Activated CD4-positive, alpha-beta memory T cell treated with anti-CD3 and anti-CD28 coated beads, Interleukin-2, amount 10 ng/mL, durations not matched to agents 7 days and 5 days (primary cell): ENCODE measurements at regions of chr3 and their contacts with region 1.

Region 1: DNA sequence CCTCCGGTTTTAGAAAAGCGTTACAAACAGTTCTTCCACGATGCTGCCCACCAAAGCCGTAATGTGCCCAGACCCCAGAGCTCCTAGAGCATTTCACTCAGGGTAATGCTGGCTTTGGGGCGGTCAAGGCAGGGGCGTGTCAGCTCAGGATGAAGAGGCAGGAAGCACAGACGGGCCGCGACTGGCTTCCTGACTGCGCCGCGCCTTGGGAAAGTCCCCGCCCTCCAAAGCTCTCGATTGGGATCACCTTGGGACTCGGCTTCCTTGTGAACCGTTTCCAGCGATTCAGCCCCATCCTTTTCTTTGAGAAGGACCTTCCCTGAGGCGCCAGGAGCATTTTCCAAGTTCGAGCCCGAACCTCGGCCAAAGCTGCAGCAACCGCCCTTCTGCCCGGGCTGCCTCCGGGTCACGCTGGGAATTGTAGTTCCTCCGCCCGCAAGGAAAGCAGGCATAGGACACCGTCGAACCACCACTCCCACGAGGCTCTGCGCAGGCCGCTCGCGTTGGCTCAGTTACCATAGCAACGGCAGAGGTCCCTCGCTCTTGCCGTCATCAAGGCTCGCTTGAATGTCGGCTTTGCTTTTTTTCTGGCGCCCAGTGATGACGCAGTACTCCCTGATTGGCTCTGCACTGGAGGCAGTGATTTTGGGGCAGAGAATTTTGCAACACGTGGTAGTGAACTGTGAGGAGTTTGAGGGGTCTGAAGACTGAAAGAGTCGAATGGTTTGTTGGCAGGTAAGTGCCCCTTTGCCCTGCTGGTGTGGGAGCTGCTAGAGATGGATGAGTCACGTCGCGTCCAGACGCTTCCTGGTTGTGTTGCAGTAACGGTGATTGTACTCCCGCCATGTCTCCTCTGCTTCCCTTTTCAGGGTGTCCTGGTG is at the starts of genes CCDC191 and QTRT2:
- DNase-seq: peak; percentile 99
- H3K4me3 Mint-ChIP-seq: peak within 1 kb of the TSS; percentile 92
- H3K27ac Mint-ChIP-seq: peak within 1 kb of the TSS; percentile 84
- H3K4me1 Mint-ChIP-seq: peaks cover 38% of the 10 kb centered on the region
- H3K27me3 Mint-ChIP-seq: no peaks in the 10 kb centered on the region
- total RNA-seq, gene CCDC191: 2.6 to 3.0 TPM
- total RNA-seq, gene QTRT2: 23.3 to 25.6 TPM

Region 2: GRCh38 chr3:114067804-114068203 is 11.4 kb after region 1 on chr3:
- CTCF ChIA-PET with region 1: interaction called, 3 read pairs
- POLR2A ChIA-PET with region 1: interaction called, 10 read pairs
- DNase-seq: no peak
- H3K4me3 Mint-ChIP-seq: no peak overlapping the region
- H3K27ac Mint-ChIP-seq: no peak overlapping the region
- H3K4me1 Mint-ChIP-seq: peaks cover 2% of the 10 kb centered on the region
- H3K27me3 Mint-ChIP-seq: no peaks in the 10 kb centered on the region